ENCODE measurements at regions of chr12 and their contacts with region 1.

Region 1: DNA sequence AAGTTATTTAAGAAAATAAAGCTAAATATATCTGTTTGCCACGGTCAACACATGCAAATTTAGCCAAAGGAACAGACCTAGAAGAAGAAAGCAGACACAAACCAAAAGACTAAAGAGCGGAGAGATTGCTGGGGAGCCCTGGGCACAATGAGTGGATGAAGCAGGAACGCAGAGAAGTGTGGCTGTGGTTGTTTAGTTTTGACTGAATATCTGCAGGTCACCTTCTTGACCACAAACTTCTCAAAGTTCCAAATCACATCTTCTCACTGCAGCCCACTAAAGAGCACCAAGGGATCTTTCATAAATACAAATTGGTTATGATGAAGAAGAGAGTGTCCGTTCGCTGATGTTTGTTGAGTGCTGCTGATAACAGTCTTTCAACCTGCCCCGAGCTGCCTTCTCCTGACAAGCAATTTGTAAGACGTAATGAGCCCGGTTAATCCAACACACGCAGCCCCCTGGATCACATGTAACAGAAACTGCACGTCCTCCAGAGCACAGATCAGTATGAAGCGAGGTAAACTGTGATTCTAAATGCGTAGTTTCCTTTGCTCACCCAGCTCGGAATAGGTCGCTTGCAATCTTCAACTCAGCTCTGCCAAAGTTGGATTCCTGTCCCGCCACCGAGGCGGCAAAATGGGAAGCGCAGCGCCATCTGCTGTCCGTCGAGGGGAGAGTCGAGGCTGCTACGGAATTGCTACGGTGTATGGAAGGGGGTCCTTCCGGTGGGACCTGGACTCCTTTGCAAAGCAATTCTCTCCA is 120.8 kb downstream of the GXYLT1 start:
- DNase-seq: peak; percentile 71
- H3K4me3 ChIP-seq: peak overlapping the region; percentile 13 to 35; a peak in 2 of 4 replicates
- H3K27ac ChIP-seq: no peak overlapping the region
- H3K4me1 ChIP-seq: peaks cover 0 to 2% of the 10 kb centered on the region in 2 experiments; a peak in 1 of 4 replicates
- H3K27me3 ChIP-seq: no peaks in the 10 kb centered on the region
- CTCF ChIP-seq: peak; percentile 95
- EP300 ChIP-seq: no peak
- RAD21 ChIP-seq: peak; percentile 91

Region 2: GRCh38 chr12:40946612-40947194 is 1077.2 kb before region 1 on chr12:
- CTCF ChIA-PET with region 1: interaction called, 29 read pairs
- POLR2A ChIA-PET with region 1: no interaction called
- DNase-seq: peak; percentile 17
- H3K4me3 ChIP-seq: no peak overlapping the region; a peak in 1 of 4 replicates
- H3K27ac ChIP-seq: no peak overlapping the region
- H3K4me1 ChIP-seq: peaks cover 0 to 5% of the 10 kb centered on the region in 2 experiments; a peak in 2 of 4 replicates
- H3K27me3 ChIP-seq: no peaks in the 10 kb centered on the region
- CTCF ChIP-seq: peak; percentile 76
- EP300 ChIP-seq: no peak
- RAD21 ChIP-seq: peak; percentile 83

Region 3: GRCh38 chr12:41264281-41264680 is 759.6 kb before region 1 on chr12:
- CTCF ChIA-PET with region 1: interaction called, 29 read pairs
- POLR2A ChIA-PET with region 1: no interaction called
- DNase-seq: peak; percentile 36
- H3K4me3 ChIP-seq: no peak overlapping the region
- H3K27ac ChIP-seq: no peak overlapping the region
- H3K4me1 ChIP-seq: no peaks in the 10 kb centered on the region; a peak in 1 of 4 replicates
- H3K27me3 ChIP-seq: no peaks in the 10 kb centered on the region
- CTCF ChIP-seq: peak; percentile 59
- EP300 ChIP-seq: no peak
- RAD21 ChIP-seq: peak; percentile 77

Region 4: DNA sequence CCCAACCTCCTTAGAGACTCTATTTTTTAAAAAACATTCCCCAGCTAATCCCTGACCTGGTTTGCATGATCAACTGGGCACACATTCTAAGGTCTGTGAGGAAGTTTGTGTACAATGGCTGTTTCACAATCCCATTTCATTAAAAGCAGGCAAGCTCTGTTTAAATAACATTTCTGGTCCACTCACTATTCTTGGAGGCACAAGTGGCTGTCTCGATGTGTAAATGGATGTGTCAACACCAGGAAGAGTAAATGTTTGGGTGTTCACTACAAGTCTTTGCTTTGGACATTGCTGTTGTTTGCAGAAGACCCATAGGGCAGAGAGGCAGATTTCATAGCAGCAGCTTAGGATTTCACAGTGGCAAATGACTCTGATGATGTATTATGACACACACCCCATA is 737.5 kb before region 1 on chr12:
- CTCF ChIA-PET with region 1: interaction called, 11 read pairs
- POLR2A ChIA-PET with region 1: no interaction called
- DNase-seq: no peak
- H3K4me3 ChIP-seq: no peak overlapping the region
- H3K27ac ChIP-seq: no peak overlapping the region
- H3K4me1 ChIP-seq: no peaks in the 10 kb centered on the region
- H3K27me3 ChIP-seq: no peaks in the 10 kb centered on the region
- CTCF ChIP-seq: no peak
- EP300 ChIP-seq: no peak
- RAD21 ChIP-seq: no peak

Region 5: DNA sequence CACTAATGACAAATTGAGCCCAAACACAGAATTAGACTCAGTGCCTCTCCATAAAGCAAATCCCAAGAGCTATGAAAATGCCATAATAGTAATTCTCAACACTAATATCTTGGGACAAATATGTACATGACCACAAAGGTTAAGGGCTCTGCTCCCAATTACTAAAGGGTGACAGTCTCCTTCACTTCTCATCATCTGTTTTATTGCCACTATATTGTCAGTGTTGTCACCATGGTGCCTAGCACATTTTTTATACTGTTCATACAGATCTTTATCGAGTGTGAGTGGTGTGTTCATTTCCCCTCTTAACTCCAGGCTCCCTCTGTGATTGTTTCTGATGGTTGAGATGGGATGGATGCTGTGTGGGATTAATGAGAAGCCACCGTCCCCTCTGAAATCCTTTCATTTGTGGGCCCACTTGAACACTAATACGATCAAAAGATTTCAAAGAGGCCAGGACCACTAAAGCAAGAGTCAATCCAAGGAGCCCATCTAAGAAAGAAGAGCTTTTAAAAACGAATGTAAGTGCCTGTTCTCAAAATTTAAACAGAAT is 157.0 kb before region 1 on chr12:
- CTCF ChIA-PET with region 1: no interaction called
- POLR2A ChIA-PET with region 1: no interaction called
- DNase-seq: no peak
- H3K4me3 ChIP-seq: no peak overlapping the region
- H3K27ac ChIP-seq: no peak overlapping the region
- H3K4me1 ChIP-seq: no peaks in the 10 kb centered on the region
- H3K27me3 ChIP-seq: no peaks in the 10 kb centered on the region
- CTCF ChIP-seq: no peak
- EP300 ChIP-seq: no peak
- RAD21 ChIP-seq: no peak

Region 6: GRCh38 chr12:42002563-42002962 is 21.4 kb before region 1 on chr12:
- CTCF ChIA-PET with region 1: interaction called, 20 read pairs
- POLR2A ChIA-PET with region 1: no interaction called
- DNase-seq: no peak
- H3K4me3 ChIP-seq: no peak overlapping the region
- H3K27ac ChIP-seq: no peak overlapping the region
- H3K4me1 ChIP-seq: no peaks in the 10 kb centered on the region; a peak in 1 of 4 replicates
- H3K27me3 ChIP-seq: no peaks in the 10 kb centered on the region
- CTCF ChIP-seq: no peak
- EP300 ChIP-seq: no peak
- RAD21 ChIP-seq: no peak

Region 7: GRCh38 chr12:42524716-42525115 is 500.8 kb after region 1 on chr12:
- CTCF ChIA-PET with region 1: no interaction called
- POLR2A ChIA-PET with region 1: no interaction called
- DNase-seq: no peak
- H3K4me3 ChIP-seq: no peak overlapping the region
- H3K27ac ChIP-seq: peak overlapping the region in 1 of 2 experiments; percentile 48; a peak in 1 of 4 replicates
- H3K4me1 ChIP-seq: no peaks in the 10 kb centered on the region; a peak in 1 of 4 replicates
- H3K27me3 ChIP-seq: no peaks in the 10 kb centered on the region
- CTCF ChIP-seq: no peak
- EP300 ChIP-seq: no peak
- RAD21 ChIP-seq: no peak

Measured in SK-N-SH (cell line).